Natural killer cell (primary cell): ENCODE measurements at regions of chr16 and their contacts with region 1.

Region 1: GRCh38 chr16:46830902-46831647 is at the start of gene C16orf87:
- DNase-seq: peak; percentile 90 to 96
- ATAC-seq: peak; percentile 91 to 98 (median 91)
- H3K4me3 ChIP-seq: peak within 1 kb of the TSS; percentile 66
- H3K4me3 Mint-ChIP-seq: peak within 1 kb of the TSS; percentile 97
- H3K27ac ChIP-seq: peak within 1 kb of the TSS; percentile 77
- H3K27ac Mint-ChIP-seq: peak within 1 kb of the TSS; percentile 75 to 91
- H3K4me1 ChIP-seq: peaks cover 6% of the 10 kb centered on the region
- H3K4me1 Mint-ChIP-seq: peaks cover 16 to 23% of the 10 kb centered on the region in 2 donors
- H3K27me3 ChIP-seq: no peaks in the 10 kb centered on the region
- H3K27me3 Mint-ChIP-seq: no peaks in the 10 kb centered on the region
- CTCF ChIP-seq: no peak
- total RNA-seq, gene C16orf87: 18.3 to 23.0 (median 18.8) TPM

Region 2: DNA sequence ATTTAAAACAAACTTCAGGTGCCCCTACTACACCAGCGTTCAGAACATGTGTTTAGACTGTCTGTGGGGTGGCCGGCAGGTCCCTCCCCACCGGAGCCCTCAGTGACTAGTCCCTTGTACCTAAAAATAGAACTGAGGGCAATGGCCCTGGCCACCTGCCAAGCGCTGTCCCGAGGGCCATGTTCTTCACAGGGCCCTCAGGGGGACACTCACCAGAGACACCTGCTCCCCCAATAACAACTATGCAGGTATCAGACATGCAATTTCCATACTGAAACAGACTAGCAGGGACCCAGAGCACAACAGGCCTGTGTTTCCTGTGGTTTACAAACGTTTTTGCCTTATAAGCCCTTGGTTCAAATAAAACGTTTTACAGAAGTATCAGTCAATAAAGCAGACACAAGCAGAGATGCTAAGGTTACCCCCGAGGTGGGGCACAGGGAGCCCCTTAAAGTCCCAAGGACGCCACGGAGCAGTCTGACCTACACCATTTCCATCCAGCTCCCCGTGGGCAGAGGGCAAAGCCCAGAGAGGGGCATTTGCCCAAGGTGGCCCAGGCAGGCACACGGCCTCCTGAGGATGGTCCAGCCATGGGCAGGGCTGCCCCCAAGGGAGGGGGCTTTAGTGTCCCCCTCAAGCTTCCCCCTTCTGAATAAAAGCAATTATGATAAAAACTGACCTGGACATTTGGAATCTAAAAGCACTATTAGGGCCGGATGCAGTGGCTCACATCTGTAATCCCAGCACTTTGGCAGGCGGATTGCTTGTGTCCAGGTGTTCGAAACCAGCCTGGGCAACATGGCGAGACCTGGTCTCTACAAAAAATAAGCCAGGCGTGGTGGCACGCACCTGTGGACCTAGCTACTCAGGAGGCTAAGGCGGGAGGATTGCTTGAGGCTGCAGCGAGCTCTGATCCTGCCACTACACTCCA is 82.0 kb before region 1 on chr16:
- intact Hi-C with region 1: no loop called
- DNase-seq: no peak
- ATAC-seq: no peak
- H3K4me3 ChIP-seq: no peak overlapping the region
- H3K4me3 Mint-ChIP-seq: no peak overlapping the region
- H3K27ac ChIP-seq: no peak overlapping the region
- H3K27ac Mint-ChIP-seq: no peak overlapping the region
- H3K4me1 ChIP-seq: no peaks in the 10 kb centered on the region
- H3K4me1 Mint-ChIP-seq: no peaks in the 10 kb centered on the region
- H3K27me3 ChIP-seq: no peaks in the 10 kb centered on the region
- H3K27me3 Mint-ChIP-seq: no peaks in the 10 kb centered on the region
- CTCF ChIP-seq: no peak

Region 3: GRCh38 chr16:46789499-46790414 is 41.3 kb before region 1 on chr16:
- intact Hi-C with region 1: loop called (anchors 1 kb)
- DNase-seq: peak; percentile 74 to 84
- ATAC-seq: peak; percentile 98 to 99 (median 98)
- H3K4me3 ChIP-seq: peak overlapping the region; percentile 55
- H3K4me3 Mint-ChIP-seq: peak overlapping the region; percentile 81
- H3K27ac ChIP-seq: no peak overlapping the region
- H3K27ac Mint-ChIP-seq: peak overlapping the region in 1 of 2 donors; percentile 75
- H3K4me1 ChIP-seq: peaks cover 9% of the 10 kb centered on the region
- H3K4me1 Mint-ChIP-seq: peaks cover 12 to 18% of the 10 kb centered on the region in 2 donors
- H3K27me3 ChIP-seq: no peaks in the 10 kb centered on the region
- H3K27me3 Mint-ChIP-seq: no peaks in the 10 kb centered on the region
- CTCF ChIP-seq: no peak

Region 4: DNA sequence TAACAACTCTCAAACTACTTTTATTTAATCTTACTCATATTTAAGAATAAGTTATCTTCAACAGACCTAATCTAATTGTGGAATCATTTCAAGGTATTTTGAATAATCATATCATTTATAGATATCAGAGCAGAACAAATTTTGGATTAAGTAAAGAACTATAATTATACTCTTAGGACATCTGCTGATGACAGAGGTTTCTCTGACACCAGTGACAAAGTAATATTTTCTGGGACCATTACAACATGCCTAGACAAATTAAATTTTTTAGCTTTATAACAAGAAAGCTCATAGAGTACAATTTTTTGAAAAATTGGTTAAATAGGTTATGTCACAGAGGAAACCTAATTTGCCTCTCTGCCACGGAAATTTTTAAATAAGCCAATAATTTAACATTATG is 30.6 kb before region 1 on chr16:
- intact Hi-C with region 1: no loop called
- DNase-seq: no peak
- ATAC-seq: no peak
- H3K4me3 ChIP-seq: no peak overlapping the region
- H3K4me3 Mint-ChIP-seq: no peak overlapping the region
- H3K27ac ChIP-seq: no peak overlapping the region
- H3K27ac Mint-ChIP-seq: no peak overlapping the region
- H3K4me1 ChIP-seq: no peaks in the 10 kb centered on the region
- H3K4me1 Mint-ChIP-seq: no peaks in the 10 kb centered on the region
- H3K27me3 ChIP-seq: no peaks in the 10 kb centered on the region
- H3K27me3 Mint-ChIP-seq: no peaks in the 10 kb centered on the region
- CTCF ChIP-seq: no peak

Region 5: GRCh38 chr16:46843898-46844642 is 13.0 kb after region 1 on chr16:
- intact Hi-C with region 1: no loop called
- DNase-seq: no peak
- ATAC-seq: no peak
- H3K4me3 ChIP-seq: no peak overlapping the region
- H3K4me3 Mint-ChIP-seq: no peak overlapping the region
- H3K27ac ChIP-seq: no peak overlapping the region
- H3K27ac Mint-ChIP-seq: no peak overlapping the region
- H3K4me1 ChIP-seq: no peaks in the 10 kb centered on the region
- H3K4me1 Mint-ChIP-seq: no peaks in the 10 kb centered on the region
- H3K27me3 ChIP-seq: no peaks in the 10 kb centered on the region
- H3K27me3 Mint-ChIP-seq: peaks cover 3 to 7% of the 10 kb centered on the region in 2 donors
- CTCF ChIP-seq: no peak

Region 6: DNA sequence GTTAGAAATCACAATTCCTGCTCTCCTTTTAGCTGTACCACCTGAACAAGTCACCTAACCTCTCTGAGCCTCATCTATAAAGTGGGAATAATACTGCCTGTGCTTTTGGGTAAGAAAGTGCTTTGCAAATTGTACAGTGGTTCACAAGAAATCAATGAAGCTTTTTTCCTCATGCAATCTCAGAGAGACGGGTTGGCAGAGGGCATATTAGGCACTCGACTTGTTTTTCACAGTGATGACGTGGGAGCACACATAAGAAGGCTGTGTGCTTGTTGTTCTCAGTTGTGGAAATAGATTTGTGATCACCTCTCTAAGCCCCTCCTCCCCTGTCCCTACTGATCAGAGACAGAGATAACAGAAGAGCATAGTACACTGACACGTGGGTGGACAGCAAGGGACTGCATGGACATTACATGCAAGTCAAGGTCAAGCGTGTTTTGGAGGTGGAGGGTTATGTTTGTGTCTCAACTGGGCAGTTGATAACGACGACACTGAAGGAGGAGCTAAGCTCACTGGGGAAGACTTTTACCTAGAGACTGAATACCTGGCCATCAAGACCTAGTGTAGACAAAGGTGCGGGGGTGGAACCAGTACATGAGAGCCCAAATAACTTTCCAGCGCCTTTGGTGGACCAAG is 51.3 kb after region 1 on chr16:
- intact Hi-C with region 1: no loop called
- DNase-seq: no peak
- ATAC-seq: no peak
- H3K4me3 ChIP-seq: no peak overlapping the region
- H3K4me3 Mint-ChIP-seq: peak overlapping the region; percentile 68
- H3K27ac ChIP-seq: no peak overlapping the region
- H3K27ac Mint-ChIP-seq: no peak overlapping the region
- H3K4me1 ChIP-seq: peaks cover 13% of the 10 kb centered on the region
- H3K4me1 Mint-ChIP-seq: peaks cover 6 to 18% of the 10 kb centered on the region in 2 donors
- H3K27me3 ChIP-seq: no peaks in the 10 kb centered on the region
- H3K27me3 Mint-ChIP-seq: peaks cover 8 to 14% of the 10 kb centered on the region in 2 donors
- CTCF ChIP-seq: no peak

Region 7: GRCh38 chr16:46973207-46973995 is 142.3 kb after region 1 on chr16 and contains the start of gene DNAJA2:
- intact Hi-C with region 1: loop called (anchors 2 kb)
- DNase-seq: peak; percentile 94 to 96
- ATAC-seq: peak; percentile 91 to 99 (median 93)
- H3K4me3 ChIP-seq: peak within 1 kb of the TSS; percentile 76
- H3K4me3 Mint-ChIP-seq: peak within 1 kb of the TSS; percentile 94
- H3K27ac ChIP-seq: peak within 1 kb of the TSS; percentile 97
- H3K27ac Mint-ChIP-seq: peak within 1 kb of the TSS; percentile 95 to 98
- H3K4me1 ChIP-seq: peaks cover 18% of the 10 kb centered on the region
- H3K4me1 Mint-ChIP-seq: peaks cover 28 to 33% of the 10 kb centered on the region in 2 donors
- H3K27me3 ChIP-seq: no peaks in the 10 kb centered on the region
- H3K27me3 Mint-ChIP-seq: no peaks in the 10 kb centered on the region
- CTCF ChIP-seq: no peak
- total RNA-seq, gene DNAJA2: 71.8 to 83.2 (median 74.5) TPM

Region 8: GRCh38 chr16:48385272-48386150 is 1554.4 kb after region 1 on chr16 and contains the start of gene SIAH1:
- intact Hi-C with region 1: loop called (anchors 10 kb)
- DNase-seq: peak; percentile 89 to 93
- ATAC-seq: peak; percentile 81 to 94 (median 87)
- H3K4me3 ChIP-seq: peak within 1 kb of the TSS; percentile 64
- H3K4me3 Mint-ChIP-seq: peak within 1 kb of the TSS; percentile 92
- H3K27ac ChIP-seq: peak within 1 kb of the TSS; percentile 71
- H3K27ac Mint-ChIP-seq: peak within 1 kb of the TSS; percentile 85 to 91
- H3K4me1 ChIP-seq: peaks cover 9% of the 10 kb centered on the region
- H3K4me1 Mint-ChIP-seq: peaks cover 24 to 28% of the 10 kb centered on the region in 2 donors
- H3K27me3 ChIP-seq: no peaks in the 10 kb centered on the region
- H3K27me3 Mint-ChIP-seq: no peaks in the 10 kb centered on the region
- CTCF ChIP-seq: no peak
- total RNA-seq, gene SIAH1: 52.9 to 57.7 (median 55.5) TPM